BJ (cell line): ENCODE measurements at regions of chr15 and their contacts with region 1.

Region 1: DNA sequence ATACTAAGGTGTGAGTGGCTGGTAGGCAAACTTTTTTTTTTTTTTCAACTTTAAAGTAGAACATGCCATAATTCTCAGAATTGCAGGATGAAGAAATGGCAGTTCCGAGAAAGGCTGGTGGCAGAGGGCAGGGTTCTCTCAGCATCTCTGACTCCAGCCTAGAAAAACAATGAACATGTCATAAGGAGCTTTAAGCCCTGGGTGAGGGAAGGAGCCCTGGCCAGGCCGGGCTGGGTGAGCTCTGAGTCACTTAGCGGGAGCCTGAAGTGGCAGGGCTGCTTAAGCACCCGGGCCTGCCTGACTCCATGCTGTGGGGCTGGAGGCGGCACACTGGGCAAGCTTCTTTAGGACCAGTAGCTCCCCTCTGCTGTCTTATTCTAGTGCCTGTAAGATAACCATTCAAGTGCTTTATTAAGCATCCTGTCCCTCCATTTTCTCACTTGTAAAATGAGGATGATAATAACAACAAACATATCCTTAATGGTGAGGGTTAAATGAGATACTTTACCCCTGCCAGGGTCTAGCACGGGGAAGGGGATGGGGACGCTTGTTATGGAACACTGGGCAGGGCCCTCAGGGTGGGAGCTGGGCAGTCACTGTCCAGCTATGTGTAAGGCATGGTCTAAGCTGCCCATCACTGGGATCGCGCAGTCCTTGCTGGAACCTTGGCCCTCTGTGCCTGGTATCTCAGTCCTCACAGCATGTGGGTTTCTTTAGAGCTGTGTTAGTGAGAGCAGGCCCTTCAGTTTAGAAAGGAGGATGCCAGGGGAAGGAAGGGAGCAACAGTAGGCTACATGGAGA is 18.4 kb downstream of the SMAD6 start:
- DNase-seq: no peak
- H3K4me3 ChIP-seq: no peak overlapping the region
- H3K27me3 ChIP-seq: no peaks in the 10 kb centered on the region
- CTCF ChIP-seq: no peak

Region 2: GRCh38 chr15:66692808-66693596 is 27.4 kb before region 1 on chr15:
- CTCF ChIA-PET with region 1: no interaction called
- POLR2A ChIA-PET with region 1: no interaction called
- DNase-seq: no peak
- H3K4me3 ChIP-seq: no peak overlapping the region
- H3K27me3 ChIP-seq: no peaks in the 10 kb centered on the region
- CTCF ChIP-seq: no peak

Region 3: DNA sequence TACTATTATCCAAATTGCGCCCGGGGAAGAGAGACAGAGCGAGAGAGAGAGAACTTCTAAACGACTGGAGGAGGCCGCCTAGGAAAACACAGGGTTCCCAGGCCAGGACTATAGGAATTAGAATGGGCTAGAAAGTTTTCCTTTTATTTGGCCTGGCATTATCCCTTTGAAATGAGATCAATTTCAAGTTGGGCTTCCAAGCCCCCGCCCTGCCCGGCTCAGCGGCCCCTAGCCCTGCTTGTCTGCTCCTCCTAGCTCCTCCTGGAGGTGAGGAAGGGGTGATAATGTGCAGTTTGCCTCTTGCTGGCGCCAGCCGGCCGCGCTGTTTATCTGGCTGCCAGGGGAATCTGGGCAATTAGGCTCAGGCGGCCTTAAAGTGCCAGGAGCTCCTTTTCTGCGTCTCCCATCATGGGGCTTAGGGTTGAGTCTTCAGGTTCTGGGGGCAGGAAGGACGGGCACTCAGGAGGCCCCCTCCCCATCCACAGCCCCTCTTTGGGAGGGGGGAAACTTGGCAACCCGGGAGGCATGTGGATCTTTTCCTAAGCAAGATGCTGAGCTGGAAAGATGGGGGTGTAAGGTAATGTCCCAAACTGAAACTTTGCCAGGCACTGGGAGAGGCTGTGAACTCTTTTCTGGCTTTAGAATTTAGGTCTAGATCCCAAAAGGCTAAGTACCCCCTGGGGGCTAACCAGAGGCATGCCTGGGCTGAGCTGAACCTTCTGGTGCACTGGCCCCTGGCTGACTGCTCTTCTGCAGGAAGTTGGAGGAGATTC is 12.9 kb before region 1 on chr15:
- CTCF ChIA-PET with region 1: interaction called, 13 read pairs
- POLR2A ChIA-PET with region 1: interaction called, 3 read pairs
- DNase-seq: no peak
- H3K4me3 ChIP-seq: peak overlapping the region; percentile 82
- H3K27me3 ChIP-seq: no peaks in the 10 kb centered on the region
- CTCF ChIP-seq: peak; percentile 43

Region 4: DNA sequence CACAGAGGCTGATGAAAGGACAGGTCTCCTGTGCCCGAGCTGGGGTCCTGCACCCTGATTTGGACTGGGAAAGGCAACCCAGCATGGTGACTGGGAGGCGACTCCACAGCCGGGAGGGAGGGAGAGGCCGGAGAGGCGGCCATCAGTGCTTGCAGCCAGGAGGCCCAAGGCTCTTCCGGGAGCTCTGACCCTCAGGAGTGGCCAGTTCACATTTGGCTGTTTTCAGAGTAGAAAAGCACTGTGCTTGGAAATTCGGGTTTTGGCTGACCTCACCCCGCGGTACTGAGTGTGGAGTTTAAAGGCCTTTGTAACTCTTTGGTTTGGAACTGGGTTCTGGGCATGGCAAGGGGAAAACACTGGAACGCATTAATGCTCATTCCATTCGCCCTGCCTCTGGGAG is 13.6 kb after region 1 on chr15:
- CTCF ChIA-PET with region 1: interaction called, 13 read pairs
- POLR2A ChIA-PET with region 1: no interaction called
- DNase-seq: no peak
- H3K4me3 ChIP-seq: no peak overlapping the region
- H3K27me3 ChIP-seq: no peaks in the 10 kb centered on the region
- CTCF ChIP-seq: no peak